Heart left ventricle (tissue), 16 donors: ENCODE measurements at regions of chr6 and their contacts with region 1.

Region 1: GRCh38 chr6:30742316-30743098 is at the start of gene FLOT1:
- DNase-seq: peak; percentile 97 to 99 (median 98)
- ATAC-seq: peak; percentile 88 to 95 (median 91)
- H3K4me3 ChIP-seq: peak within 1 kb of the TSS; percentile 46 to 95 (median 86)
- H3K27ac ChIP-seq: peak within 1 kb of the TSS; percentile 92 to 99 (median 97)
- H3K4me1 ChIP-seq: peaks cover 3 to 63% (median 37%) of the 10 kb centered on the region in 12 donors
- H3K27me3 ChIP-seq: no peaks in the 10 kb centered on the region
- CTCF ChIP-seq: peak in 2 of 12 donors; percentile 6 to 21
- POLR2A ChIP-seq: peak in 1 of 2 donors; percentile 64
- total RNA-seq, gene FLOT1: 166 to 282 (median 211) TPM

Region 2: GRCh38 chr6:30616811-30617564 is 125.5 kb before region 1 on chr6 and contains the start of gene PPP1R10:
- intact Hi-C with region 1: loop called in 1 of 10 experiments (anchors 5 kb)
- DNase-seq: peak; percentile 97 to 100 (median 100)
- ATAC-seq: peak; percentile 87 to 92 (median 92)
- H3K4me3 ChIP-seq: peak within 1 kb of the TSS; percentile 57 to 92 (median 78)
- H3K27ac ChIP-seq: peak within 1 kb of the TSS; percentile 94 to 99 (median 97)
- H3K4me1 ChIP-seq: peaks cover 0 to 42% (median 37%) of the 10 kb centered on the region in 12 donors
- H3K27me3 ChIP-seq: no peaks in the 10 kb centered on the region
- CTCF ChIP-seq: no peak
- POLR2A ChIP-seq: peak; percentile 99
- total RNA-seq, gene PPP1R10: 21.7 to 44.9 (median 29.9) TPM

Region 3: GRCh38 chr6:30775104-30775503 is 32.6 kb after region 1 on chr6:
- intact Hi-C with region 1: loop called in 9 of 10 experiments (anchors 2 to 5 kb)
- DNase-seq: no peak
- ATAC-seq: no peak
- H3K4me3 ChIP-seq: no peak overlapping the region
- H3K27ac ChIP-seq: peak overlapping the region in 8 of 12 donors; percentile 5 to 83 (median 56)
- H3K4me1 ChIP-seq: peaks cover 0 to 55% (median 23%) of the 10 kb centered on the region in 12 donors
- H3K27me3 ChIP-seq: no peaks in the 10 kb centered on the region
- CTCF ChIP-seq: no peak
- POLR2A ChIP-seq: no peak

Region 4: DNA sequence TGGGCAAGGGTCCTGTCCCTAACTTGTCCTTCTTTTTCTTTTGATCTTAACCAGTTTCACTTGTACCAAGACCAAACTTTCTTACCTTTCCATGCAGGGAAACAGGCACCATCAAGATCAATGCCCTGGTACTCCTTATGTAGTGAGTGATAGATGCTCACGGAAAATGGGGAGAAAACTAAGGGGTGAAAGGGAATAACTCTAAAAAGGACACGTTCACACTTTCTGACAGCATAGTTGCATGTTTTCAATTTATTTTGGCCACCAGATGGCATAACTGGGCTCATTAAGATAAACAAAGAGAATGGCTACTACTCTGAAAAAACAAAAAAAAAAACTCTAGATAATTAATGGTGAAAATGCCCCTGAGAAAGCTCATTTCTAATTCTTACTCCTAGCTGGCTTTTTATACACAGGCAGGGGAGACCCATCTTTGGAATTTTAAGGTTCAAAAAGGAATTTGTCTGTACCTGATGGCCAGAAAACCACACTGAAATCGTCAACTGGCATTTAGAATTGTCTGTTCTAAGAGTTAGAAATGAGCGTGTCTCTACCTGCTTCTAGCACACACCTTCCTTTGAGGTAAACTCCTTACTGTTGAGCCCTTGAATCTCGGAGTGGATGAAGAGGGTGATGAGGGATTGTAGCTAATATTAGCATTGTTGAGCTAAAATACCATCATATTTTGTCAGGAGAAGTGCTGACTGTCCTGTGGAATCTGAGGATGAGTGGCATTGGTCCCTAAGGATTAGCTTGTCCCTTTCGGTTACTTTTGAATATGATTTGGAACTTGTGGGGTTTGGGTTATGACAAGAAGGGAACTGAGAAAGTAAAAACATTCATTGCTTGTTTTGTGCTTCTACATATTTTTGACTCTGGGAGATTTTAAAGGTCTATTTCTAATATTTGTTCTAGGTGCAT is 79.6 kb after region 1 on chr6:
- intact Hi-C with region 1: loop called in 9 of 10 experiments (anchors 2 to 10 kb)
- DNase-seq: no peak
- ATAC-seq: no peak
- H3K4me3 ChIP-seq: no peak overlapping the region
- H3K27ac ChIP-seq: peak overlapping the region in 6 of 12 donors; percentile 34 to 64 (median 46)
- H3K4me1 ChIP-seq: peaks cover 0 to 68% (median 21%) of the 10 kb centered on the region in 12 donors
- H3K27me3 ChIP-seq: no peaks in the 10 kb centered on the region
- CTCF ChIP-seq: peak; percentile 29 to 64 (median 47)
- POLR2A ChIP-seq: no peak

Region 5: GRCh38 chr6:30877419-30878371 is 135.2 kb after region 1 on chr6:
- intact Hi-C with region 1: loop called (anchors 1 to 10 kb)
- DNase-seq: peak; percentile 88 to 92 (median 89)
- ATAC-seq: peak; percentile 87 to 93 (median 90)
- H3K4me3 ChIP-seq: peak overlapping the region in 11 of 12 donors; percentile 14 to 56 (median 40)
- H3K27ac ChIP-seq: peak overlapping the region; percentile 22 to 85 (median 62)
- H3K4me1 ChIP-seq: peaks cover 0 to 32% (median 13%) of the 10 kb centered on the region in 12 donors
- H3K27me3 ChIP-seq: no peaks in the 10 kb centered on the region
- CTCF ChIP-seq: peak; percentile 77 to 95 (median 90)
- POLR2A ChIP-seq: no peak

Region 6: DNA sequence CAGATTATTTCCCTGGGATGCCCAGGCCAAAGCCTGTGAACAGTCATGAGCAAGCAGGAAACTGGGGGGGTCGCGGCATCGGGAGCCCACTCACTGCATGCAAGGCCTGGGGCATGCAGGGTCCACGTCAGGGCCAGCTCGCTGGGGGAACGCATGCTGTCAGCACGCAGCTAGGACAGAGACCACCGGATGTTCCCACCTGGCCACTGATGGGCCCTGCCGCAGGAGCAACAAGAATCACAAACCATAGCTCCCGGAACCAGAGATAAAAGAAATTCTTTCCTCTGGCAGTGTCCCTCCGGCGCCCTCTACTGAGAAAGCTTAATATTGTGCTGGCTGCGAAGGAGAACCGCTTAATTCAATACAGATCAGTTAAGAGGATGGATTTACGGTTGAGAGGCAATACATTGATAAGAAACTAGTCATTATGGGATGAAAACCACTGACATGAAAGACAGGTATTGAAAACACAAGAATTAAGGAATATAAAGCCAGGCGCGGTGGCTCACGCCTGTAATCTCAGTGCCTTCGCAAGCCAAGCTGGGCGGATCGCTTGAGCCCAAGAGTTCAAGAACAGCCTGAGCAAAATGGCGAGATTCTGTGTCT is 337.3 kb after region 1 on chr6:
- intact Hi-C with region 1: loop called in 2 of 10 experiments (anchors 10 kb)
- DNase-seq: peak in 4 of 5 donors; percentile 42 to 59 (median 52)
- ATAC-seq: peak in 3 of 4 donors; percentile 66 to 75 (median 69)
- H3K4me3 ChIP-seq: peak overlapping the region in 9 of 12 donors; percentile 13 to 49 (median 29)
- H3K27ac ChIP-seq: no peak overlapping the region
- H3K4me1 ChIP-seq: peaks cover 0 to 19% (median 4%) of the 10 kb centered on the region in 12 donors
- H3K27me3 ChIP-seq: no peaks in the 10 kb centered on the region
- CTCF ChIP-seq: peak; percentile 63 to 92 (median 78)
- POLR2A ChIP-seq: no peak

Region 7: GRCh38 chr6:31175971-31176370 is 433.5 kb after region 1 on chr6:
- intact Hi-C with region 1: no loop called
- DNase-seq: no peak
- ATAC-seq: peak in 1 of 4 donors; percentile 49
- H3K4me3 ChIP-seq: no peak overlapping the region
- H3K27ac ChIP-seq: peak overlapping the region in 1 of 12 donors; percentile 41
- H3K4me1 ChIP-seq: peaks cover 0 to 45% (median 2%) of the 10 kb centered on the region in 12 donors
- H3K27me3 ChIP-seq: no peaks in the 10 kb centered on the region
- CTCF ChIP-seq: no peak
- POLR2A ChIP-seq: no peak